ENCODE measurements at regions of chr6 and their contacts with region 1.

Region 1: DNA sequence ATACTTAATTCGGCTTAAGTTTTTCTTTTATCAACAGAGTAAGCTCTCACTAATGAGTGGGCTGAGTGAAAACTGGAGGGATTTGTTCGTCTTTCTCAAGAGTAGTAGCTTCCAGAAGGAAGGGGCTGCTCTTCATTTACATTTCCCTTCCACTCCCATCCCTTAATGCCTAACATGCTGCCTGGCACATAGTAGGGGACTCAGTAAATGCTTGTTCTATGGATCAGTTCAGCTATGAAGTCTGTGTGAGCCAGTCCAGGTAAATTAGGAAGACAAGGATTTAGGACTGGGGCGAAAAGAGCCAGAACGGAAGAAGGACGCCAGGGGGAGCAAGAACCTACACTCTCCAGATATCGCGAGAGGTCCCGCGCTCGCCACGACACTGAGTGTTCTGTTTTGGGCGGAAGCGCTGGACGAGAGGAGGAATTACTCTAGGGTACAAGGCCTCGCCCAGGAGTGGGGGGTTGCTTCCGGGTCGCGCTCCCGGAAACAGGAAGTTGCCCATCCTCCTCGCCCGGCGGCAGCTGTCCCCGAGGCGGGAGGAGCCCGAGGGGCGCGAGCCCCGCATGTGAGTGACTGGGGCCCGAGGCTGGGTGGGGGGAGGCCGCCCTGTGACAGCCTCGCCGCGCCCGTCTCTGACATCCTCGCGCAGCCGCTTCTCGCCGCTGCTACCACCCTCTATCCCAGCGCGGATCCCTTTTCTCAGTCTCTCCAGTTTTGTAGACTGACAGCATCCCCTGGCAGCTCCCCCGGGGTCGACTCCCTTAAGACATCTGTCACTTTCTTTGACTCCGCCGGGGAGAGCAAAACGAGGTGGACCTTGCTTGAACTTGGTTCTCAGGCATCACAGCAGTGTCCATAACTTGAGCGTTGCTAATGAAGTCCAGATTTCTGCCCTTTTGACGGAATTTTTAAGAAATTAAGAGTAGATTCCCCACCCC is at the start of gene C6orf89:
- DNase-seq: peak; percentile 98
- H3K4me3 Mint-ChIP-seq: peak within 1 kb of the TSS; percentile 88
- H3K27ac Mint-ChIP-seq: peak within 1 kb of the TSS; percentile 92
- H3K4me1 Mint-ChIP-seq: peaks cover 36% of the 10 kb centered on the region
- H3K27me3 Mint-ChIP-seq: no peaks in the 10 kb centered on the region
- total RNA-seq, gene C6orf89: 29.2 to 29.8 TPM

Region 2: GRCh38 chr6:36660771-36661471 is 224.8 kb before region 1 on chr6:
- CTCF ChIA-PET with region 1: no interaction called
- POLR2A ChIA-PET with region 1: no interaction called
- intact Hi-C with region 1: no loop called
- DNase-seq: no peak
- H3K4me3 Mint-ChIP-seq: no peak overlapping the region
- H3K27ac Mint-ChIP-seq: no peak overlapping the region
- H3K4me1 Mint-ChIP-seq: peaks cover 11% of the 10 kb centered on the region
- H3K27me3 Mint-ChIP-seq: peaks cover 16% of the 10 kb centered on the region

Region 3: GRCh38 chr6:36874443-36875249 is 11.1 kb before region 1 on chr6 and contains the start of gene PPIL1:
- CTCF ChIA-PET with region 1: interaction called, 93 read pairs
- POLR2A ChIA-PET with region 1: interaction called, 8 read pairs
- intact Hi-C with region 1: loop called (anchors 1 kb)
- DNase-seq: peak; percentile 88
- H3K4me3 Mint-ChIP-seq: peak within 1 kb of the TSS; percentile 98
- H3K27ac Mint-ChIP-seq: peak within 1 kb of the TSS; percentile 99
- H3K4me1 Mint-ChIP-seq: peaks cover 40% of the 10 kb centered on the region
- H3K27me3 Mint-ChIP-seq: peaks cover 2% of the 10 kb centered on the region
- total RNA-seq, gene PPIL1: 38.5 to 40.6 TPM

Region 4: DNA sequence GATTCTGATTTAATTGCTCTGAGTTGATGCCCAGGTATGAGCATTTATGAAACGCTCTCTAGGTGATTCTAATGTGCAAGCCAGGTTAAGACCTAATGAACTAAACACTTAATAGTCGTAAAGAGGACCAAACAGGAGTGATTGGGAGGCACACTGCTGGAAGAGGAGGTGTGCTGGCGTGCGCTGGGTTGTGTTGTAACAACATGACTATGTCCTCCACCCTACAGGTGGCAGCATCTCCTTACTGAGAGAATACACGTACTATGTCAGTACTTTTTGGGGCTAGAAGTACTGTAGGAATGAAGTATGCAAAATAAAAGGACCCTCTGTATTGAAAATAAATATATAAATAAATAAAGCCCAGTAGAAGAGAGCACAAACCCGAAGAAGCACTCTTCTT is 11.9 kb after region 1 on chr6:
- CTCF ChIA-PET with region 1: interaction called, 11 read pairs
- POLR2A ChIA-PET with region 1: no interaction called
- intact Hi-C with region 1: no loop called
- DNase-seq: no peak
- H3K4me3 Mint-ChIP-seq: no peak overlapping the region
- H3K27ac Mint-ChIP-seq: no peak overlapping the region
- H3K4me1 Mint-ChIP-seq: peaks cover 13% of the 10 kb centered on the region
- H3K27me3 Mint-ChIP-seq: no peaks in the 10 kb centered on the region

Region 5: DNA sequence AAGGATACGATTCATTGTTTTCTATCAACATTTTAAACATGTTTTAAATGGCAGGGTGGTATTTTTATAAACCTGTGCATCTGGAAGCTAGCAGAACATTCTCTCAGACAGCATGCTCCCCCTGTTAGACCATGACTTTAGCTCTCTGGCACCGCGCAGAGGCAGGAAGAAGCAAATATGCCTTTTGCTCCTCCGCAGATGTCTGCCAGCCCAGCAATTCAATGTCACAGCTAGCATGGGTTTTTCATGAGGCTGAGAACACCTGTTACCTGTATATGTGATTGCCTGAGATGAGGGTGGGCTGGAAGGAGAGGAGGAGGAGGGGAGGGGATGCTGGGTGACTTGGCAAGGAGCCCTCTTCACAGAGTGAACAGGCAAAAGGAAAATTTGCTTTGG is 93.6 kb after region 1 on chr6:
- CTCF ChIA-PET with region 1: interaction called, 11 read pairs
- POLR2A ChIA-PET with region 1: interaction called, 3 read pairs
- intact Hi-C with region 1: loop called (anchors 1 kb)
- DNase-seq: peak; percentile 41
- H3K4me3 Mint-ChIP-seq: no peak overlapping the region
- H3K27ac Mint-ChIP-seq: peak overlapping the region; percentile 47
- H3K4me1 Mint-ChIP-seq: peaks cover 24% of the 10 kb centered on the region
- H3K27me3 Mint-ChIP-seq: no peaks in the 10 kb centered on the region

Region 6: GRCh38 chr6:36985808-36986703 is 100.3 kb after region 1 on chr6 and contains the start of gene MTCH1:
- CTCF ChIA-PET with region 1: interaction called, 7 read pairs
- POLR2A ChIA-PET with region 1: interaction called, 3 read pairs
- intact Hi-C with region 1: loop called (anchors 1 kb)
- DNase-seq: peak; percentile 90
- H3K4me3 Mint-ChIP-seq: peak within 1 kb of the TSS; percentile 99
- H3K27ac Mint-ChIP-seq: peak within 1 kb of the TSS; percentile 90
- H3K4me1 Mint-ChIP-seq: peaks cover 18% of the 10 kb centered on the region
- H3K27me3 Mint-ChIP-seq: no peaks in the 10 kb centered on the region
- total RNA-seq, gene MTCH1: 109 to 114 TPM

Measured in activated CD4-positive, alpha-beta memory T cell treated with anti-CD3 and anti-CD28 coated beads for 36 hours (primary cell).